ENCODE measurements at regions of chr3 and their contacts with region 1.

Region 1: DNA sequence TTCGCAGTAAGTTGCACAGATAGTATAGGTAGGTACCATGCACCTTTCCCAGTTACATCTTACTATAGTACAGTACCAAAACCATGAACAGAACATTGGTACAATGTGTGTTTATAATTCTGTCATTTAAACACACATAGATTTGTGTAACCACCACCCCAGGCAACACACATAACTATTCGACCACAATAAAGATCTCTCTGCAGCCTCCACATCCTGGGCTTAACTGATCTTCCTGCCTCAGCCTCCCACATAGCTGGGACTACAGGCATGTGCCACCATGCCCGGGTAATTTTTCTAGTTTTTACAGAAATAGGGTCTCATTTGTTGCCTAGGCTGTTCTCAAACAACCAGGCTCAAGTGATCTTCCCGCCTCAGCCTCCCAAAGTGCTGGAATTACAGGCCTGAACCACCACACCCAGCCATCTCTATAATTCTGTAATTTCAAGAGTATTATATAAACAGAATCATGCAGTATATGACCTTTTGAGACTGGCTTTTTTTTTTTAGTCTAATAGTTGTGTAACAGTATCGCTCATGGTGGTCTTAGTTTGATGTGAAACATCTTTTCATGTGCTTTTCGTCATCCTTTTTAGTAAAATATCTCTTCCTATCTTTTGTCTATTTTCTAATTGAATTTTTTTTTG is 13.3 kb upstream of the TMF1 start:
- DNase-seq: no peak
- H3K4me3 ChIP-seq: no peak overlapping the region
- H3K27ac ChIP-seq: no peak overlapping the region
- H3K4me1 ChIP-seq: no peaks in the 10 kb centered on the region
- CTCF ChIP-seq: no peak

Region 2: DNA sequence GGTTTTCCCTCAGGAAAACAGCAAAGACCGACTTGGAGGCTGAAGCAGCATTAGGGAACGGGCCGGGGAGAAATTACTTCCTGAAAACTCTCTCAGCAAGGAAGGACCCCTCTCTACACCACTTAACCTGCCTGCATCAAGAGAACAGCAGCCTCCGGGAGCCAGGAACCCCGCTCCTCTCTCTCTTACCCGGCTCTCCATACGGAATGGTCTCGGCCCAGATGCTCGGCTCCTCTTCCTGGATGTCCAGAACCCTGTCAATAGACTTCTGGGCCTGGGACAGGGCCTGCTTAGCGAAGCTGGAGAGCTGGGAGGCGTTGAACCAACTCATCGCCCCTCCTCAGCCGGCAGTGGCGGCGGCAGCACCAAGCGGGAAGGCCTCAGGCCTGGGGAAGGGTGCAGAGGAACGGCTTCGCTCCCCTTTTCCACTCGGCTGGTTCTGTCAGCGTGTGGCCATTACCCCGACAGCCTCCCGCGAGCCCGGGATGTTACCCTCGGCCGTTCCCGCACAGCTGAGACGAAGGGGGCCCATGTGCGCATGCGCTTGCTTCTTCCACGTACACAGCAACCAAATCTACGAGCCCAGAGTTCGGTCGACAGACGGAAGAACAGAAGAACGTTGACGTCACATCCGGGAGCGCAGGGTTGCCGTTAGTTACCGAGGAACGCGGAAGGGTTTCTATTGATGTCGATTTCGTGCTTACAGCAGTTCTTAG is 13.5 kb before region 1 on chr3 and contains the start of gene TMF1:
- CTCF ChIA-PET with region 1: interaction called, 3 read pairs
- POLR2A ChIA-PET with region 1: interaction called, 10 read pairs
- intact Hi-C with region 1: no loop called
- DNase-seq: peak; percentile 98
- H3K4me3 ChIP-seq: peak within 1 kb of the TSS; percentile 88
- H3K27ac ChIP-seq: peak within 1 kb of the TSS; percentile 56
- H3K4me1 ChIP-seq: peaks cover 16% of the 10 kb centered on the region
- CTCF ChIP-seq: no peak
- total RNA-seq, gene TMF1: 16.6 and 20.8 TPM in 2 replicates

Measured in OCI-LY7 (cell line).